A549 (cell line): ENCODE measurements at regions of chr11 and their contacts with region 1.

Region 1: GRCh38 chr11:45771566-45772448 is 33.1 kb upstream of the SLC35C1 start:
- DNase-seq: peak; percentile 74 to 96
- ATAC-seq: peak; percentile 95 to 98
- H3K4me3 ChIP-seq: peak overlapping the region; percentile 52
- H3K27ac ChIP-seq: peak overlapping the region; percentile 8 to 36; a peak in 1 of 6 replicates
- H3K4me1 ChIP-seq: no peaks in the 10 kb centered on the region
- CTCF ChIP-seq: peak; percentile 87
- EP300 ChIP-seq: no peak
- POLR2A ChIP-seq: no peak
- RAD21 ChIP-seq: peak; percentile 89 to 95

Region 2: GRCh38 chr11:45365961-45366618 is 405.7 kb before region 1 on chr11:
- CTCF ChIA-PET with region 1: interaction called, 97 read pairs
- POLR2A ChIA-PET with region 1: interaction called, 7 read pairs
- DNase-seq: no peak
- ATAC-seq: no peak
- H3K4me3 ChIP-seq: no peak overlapping the region
- H3K27ac ChIP-seq: no peak overlapping the region
- H3K4me1 ChIP-seq: no peaks in the 10 kb centered on the region
- CTCF ChIP-seq: no peak
- EP300 ChIP-seq: no peak
- POLR2A ChIP-seq: no peak
- RAD21 ChIP-seq: no peak

Region 3: DNA sequence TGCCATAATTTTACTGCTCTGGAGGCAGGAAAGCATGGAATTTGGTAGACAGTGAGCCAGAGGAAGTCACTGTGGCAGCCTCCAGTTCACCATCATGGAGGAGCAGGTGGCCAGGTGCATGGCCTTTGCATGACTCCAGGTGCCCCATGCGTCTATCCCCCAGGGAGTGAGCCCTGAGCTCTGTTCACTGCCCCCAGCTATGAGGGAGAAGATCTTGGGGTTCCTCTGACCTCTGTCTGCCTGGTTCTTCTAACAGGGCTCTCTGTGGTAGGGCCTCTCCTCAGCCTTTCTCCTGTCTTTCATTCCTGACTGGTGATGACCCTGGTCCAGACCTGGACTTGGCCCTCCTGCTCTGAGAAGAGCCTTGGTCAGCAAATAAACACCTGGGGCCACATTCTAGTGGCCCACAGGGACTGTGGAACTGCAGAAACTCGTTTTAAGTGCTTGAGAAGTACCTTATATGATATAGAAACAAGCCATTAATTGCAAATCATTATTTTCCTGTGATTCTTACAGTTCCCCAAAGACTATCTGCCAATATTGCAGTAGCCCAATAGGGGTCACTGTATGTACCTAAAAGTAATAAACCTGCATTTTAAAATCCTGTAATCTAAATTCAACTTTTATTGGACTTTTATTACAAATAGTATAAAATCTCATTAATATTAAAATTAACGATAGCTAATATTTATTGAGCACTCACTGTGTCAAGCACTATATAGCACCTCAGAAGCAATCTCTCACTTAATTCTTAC is 365.7 kb before region 1 on chr11:
- CTCF ChIA-PET with region 1: interaction called, 18 read pairs
- POLR2A ChIA-PET with region 1: no interaction called
- DNase-seq: peak in 1 of 2 experiments; percentile 13
- ATAC-seq: 0 out of 6 replicates have a peak, but pooled peaks of 1 of the 2 experiments have one; percentile 46
- H3K4me3 ChIP-seq: no peak overlapping the region
- H3K27ac ChIP-seq: no peak overlapping the region
- H3K4me1 ChIP-seq: no peaks in the 10 kb centered on the region; the same call in 2 of the 3 replicates
- CTCF ChIP-seq: peak; percentile 43; the same call in 2 of the 3 replicates
- EP300 ChIP-seq: no peak
- POLR2A ChIP-seq: no peak
- RAD21 ChIP-seq: peak; percentile 41 to 47; a peak in 4 of 5 replicates

Region 4: DNA sequence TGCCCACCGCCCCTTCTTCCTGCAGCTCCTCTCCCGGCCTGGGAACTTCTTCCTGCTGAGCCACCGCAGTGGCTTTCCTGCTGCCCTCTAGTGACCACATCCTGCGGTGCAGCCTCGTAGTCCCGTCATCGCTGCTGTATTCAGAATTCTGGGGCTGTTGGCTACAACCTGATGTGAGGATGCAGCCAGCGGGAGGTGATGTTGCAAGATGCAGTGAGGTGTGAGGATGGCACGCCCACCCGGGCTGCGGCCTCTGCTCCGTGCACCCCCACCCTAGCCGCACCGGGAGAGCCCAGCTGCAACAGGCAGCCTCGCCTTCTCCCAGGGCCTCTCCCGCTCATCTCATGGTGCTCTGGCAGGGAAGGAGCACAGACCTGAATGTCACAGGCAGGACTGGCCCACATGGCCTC is 116.5 kb before region 1 on chr11:
- CTCF ChIA-PET with region 1: interaction called, 19 read pairs
- POLR2A ChIA-PET with region 1: no interaction called
- DNase-seq: peak; percentile 61 to 88
- ATAC-seq: peak; percentile 83 to 93
- H3K4me3 ChIP-seq: no peak overlapping the region
- H3K27ac ChIP-seq: no peak overlapping the region
- H3K4me1 ChIP-seq: no peaks in the 10 kb centered on the region
- CTCF ChIP-seq: peak; percentile 75
- EP300 ChIP-seq: no peak
- POLR2A ChIP-seq: no peak
- RAD21 ChIP-seq: peak; percentile 64 to 67

Region 5: GRCh38 chr11:45754261-45754709 is 17.5 kb before region 1 on chr11:
- CTCF ChIA-PET with region 1: interaction called, 96 read pairs
- POLR2A ChIA-PET with region 1: no interaction called
- DNase-seq: no peak
- ATAC-seq: peak in 1 of 2 experiments; percentile 34; a peak in 2 of 6 replicates
- H3K4me3 ChIP-seq: no peak overlapping the region
- H3K27ac ChIP-seq: no peak overlapping the region
- H3K4me1 ChIP-seq: no peaks in the 10 kb centered on the region
- CTCF ChIP-seq: no peak
- EP300 ChIP-seq: no peak
- POLR2A ChIP-seq: no peak
- RAD21 ChIP-seq: no peak

Region 6: GRCh38 chr11:45804761-45805304 is 33.0 kb after region 1 on chr11 and contains the start of gene SLC35C1:
- CTCF ChIA-PET with region 1: interaction called, 44 read pairs
- POLR2A ChIA-PET with region 1: no interaction called
- DNase-seq: peak; percentile 87 to 94
- ATAC-seq: peak; percentile 90 to 95
- H3K4me3 ChIP-seq: peak within 1 kb of the TSS; percentile 68
- H3K27ac ChIP-seq: peak within 1 kb of the TSS; percentile 89 to 92
- H3K4me1 ChIP-seq: peaks cover 23% of the 10 kb centered on the region
- CTCF ChIP-seq: no peak
- EP300 ChIP-seq: no peak
- POLR2A ChIP-seq: peak; percentile 68
- RAD21 ChIP-seq: no peak
- polyA plus RNA-seq, gene SLC35C1: 3.3 and 7.8 TPM in 2 replicates